Sciatic nerve (tissue), 2 donors: ENCODE measurements at regions of chr11 and their contacts with region 1.

Region 1: GRCh38 chr11:128624269-128625175 is 37.2 kb upstream of the ETS1 start:
- DNase-seq: no peak
- ATAC-seq: no peak

Region 2: GRCh38 chr11:128172046-128172878 is 452.3 kb before region 1 on chr11:
- intact Hi-C with region 1: loop called (anchors 10 kb)
- DNase-seq: peak; percentile 91
- ATAC-seq: peak; percentile 86